ENCODE measurements at regions of chr1 and their contacts with region 1.

Region 1: DNA sequence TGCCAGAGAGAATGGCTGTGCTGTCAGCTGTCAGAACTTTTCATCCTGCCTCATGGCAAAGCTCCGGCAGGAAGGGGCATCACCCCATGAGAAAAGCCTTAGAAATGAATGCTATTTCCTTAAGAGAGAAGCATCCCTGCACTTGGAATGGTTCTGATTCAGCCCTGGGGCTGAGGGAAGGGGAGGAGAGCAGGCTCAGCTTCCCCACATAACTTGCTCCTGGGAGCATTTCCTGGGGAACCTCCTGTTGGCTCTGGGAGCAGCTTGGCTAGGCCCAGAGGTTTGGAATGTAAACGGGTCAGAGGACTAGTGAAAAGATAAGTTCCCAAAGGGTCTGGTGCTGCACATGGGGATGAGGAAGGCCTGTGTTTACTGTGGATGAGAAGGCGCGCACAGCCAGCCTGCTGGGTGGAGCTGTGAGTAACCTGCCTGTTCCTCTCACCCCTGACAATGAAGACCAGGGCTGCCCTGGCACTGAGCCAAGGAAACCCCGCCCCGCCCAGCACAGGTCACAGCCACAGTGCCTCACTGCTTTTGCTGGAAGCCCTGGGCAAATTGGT is 5.0 kb downstream of the PRELP start:
- DNase-seq: peak; percentile 87
- ATAC-seq: peak; percentile 57

Region 2: GRCh38 chr1:203340112-203340804 is 140.3 kb before region 1 on chr1:
- intact Hi-C with region 1: loop called (anchors 5 kb)
- DNase-seq: peak; percentile 79
- ATAC-seq: peak; percentile 85

Region 3: GRCh38 chr1:203711251-203712007 is 230.8 kb after region 1 on chr1:
- intact Hi-C with region 1: no loop called
- DNase-seq: no peak
- ATAC-seq: no peak

Region 4: DNA sequence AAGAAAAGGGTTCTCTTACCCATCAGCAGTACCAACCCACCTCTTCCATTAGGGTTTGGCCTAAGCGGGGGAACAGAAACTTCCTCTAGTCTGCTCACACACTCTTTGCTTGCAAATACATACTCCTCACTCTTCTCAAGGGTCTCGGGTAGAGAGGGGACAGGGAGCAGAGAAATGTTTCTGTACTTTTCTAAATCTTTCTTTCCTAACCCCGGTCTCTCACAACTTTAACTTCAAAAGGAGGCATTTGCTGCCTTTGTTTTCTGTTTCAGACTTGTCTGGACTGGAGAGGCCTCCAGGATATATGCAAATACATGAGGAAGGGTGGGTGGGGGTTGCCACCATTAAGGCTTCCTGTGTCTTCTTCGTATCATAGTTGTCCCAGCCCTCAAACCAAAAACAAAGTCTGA is 273.9 kb after region 1 on chr1:
- intact Hi-C with region 1: no loop called
- DNase-seq: no peak
- ATAC-seq: no peak